SK-N-SH (cell line): ENCODE measurements at regions of chr20 and their contacts with region 1.

Region 1: DNA sequence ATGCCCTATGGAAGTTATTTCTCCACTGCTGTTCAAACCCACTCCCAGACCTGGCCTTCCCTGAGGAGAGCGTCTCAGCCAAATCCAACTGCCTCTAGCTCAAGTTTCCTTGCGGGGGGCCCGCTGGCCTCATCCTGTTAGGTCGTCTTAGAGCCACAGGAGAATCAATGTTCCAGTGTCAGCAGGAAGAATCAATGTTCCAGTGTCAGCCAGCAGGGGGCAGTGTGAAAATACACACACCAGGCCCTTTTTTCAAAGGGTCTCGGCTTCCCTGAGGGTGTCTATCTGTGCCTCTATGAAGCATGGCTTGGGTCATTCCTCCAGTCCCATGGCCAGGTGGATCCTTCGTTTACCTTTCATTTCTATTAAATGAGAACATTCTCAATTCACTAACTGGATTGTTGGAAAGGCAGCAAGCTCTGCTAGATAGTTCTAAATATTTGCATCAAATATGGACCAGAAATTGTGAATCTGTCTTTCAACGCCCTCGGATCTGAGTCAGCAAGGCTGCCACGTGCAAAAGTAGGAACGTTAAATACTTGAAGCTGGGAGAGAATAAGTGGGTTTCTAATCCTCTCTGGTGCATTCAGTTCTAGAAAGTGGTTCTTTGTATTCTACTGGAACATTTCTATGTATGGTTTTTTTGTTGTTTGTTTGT is 19.2 kb downstream of the PRND start:
- DNase-seq: peak; percentile 41
- H3K4me3 ChIP-seq: peak overlapping the region in 1 of 2 experiments; percentile 42; a peak in 1 of 4 replicates
- H3K27ac ChIP-seq: no peak overlapping the region
- H3K4me1 ChIP-seq: no peaks in the 10 kb centered on the region
- H3K27me3 ChIP-seq: peaks cover 18% of the 10 kb centered on the region; the same call in 1 of the 2 replicates
- CTCF ChIP-seq: peak; percentile 82
- EP300 ChIP-seq: no peak
- RAD21 ChIP-seq: peak; percentile 49

Region 2: GRCh38 chr20:4720041-4720976 is 20.6 kb before region 1 on chr20:
- CTCF ChIA-PET with region 1: interaction called, 13 read pairs
- POLR2A ChIA-PET with region 1: interaction called, 4 read pairs
- DNase-seq: peak; percentile 86
- H3K4me3 ChIP-seq: no peak overlapping the region
- H3K27ac ChIP-seq: no peak overlapping the region
- H3K4me1 ChIP-seq: peaks cover 0 to 3% of the 10 kb centered on the region in 2 experiments; a peak in 1 of 4 replicates
- H3K27me3 ChIP-seq: no peaks in the 10 kb centered on the region
- CTCF ChIP-seq: peak; percentile 86
- EP300 ChIP-seq: no peak
- RAD21 ChIP-seq: peak; percentile 90

Region 3: DNA sequence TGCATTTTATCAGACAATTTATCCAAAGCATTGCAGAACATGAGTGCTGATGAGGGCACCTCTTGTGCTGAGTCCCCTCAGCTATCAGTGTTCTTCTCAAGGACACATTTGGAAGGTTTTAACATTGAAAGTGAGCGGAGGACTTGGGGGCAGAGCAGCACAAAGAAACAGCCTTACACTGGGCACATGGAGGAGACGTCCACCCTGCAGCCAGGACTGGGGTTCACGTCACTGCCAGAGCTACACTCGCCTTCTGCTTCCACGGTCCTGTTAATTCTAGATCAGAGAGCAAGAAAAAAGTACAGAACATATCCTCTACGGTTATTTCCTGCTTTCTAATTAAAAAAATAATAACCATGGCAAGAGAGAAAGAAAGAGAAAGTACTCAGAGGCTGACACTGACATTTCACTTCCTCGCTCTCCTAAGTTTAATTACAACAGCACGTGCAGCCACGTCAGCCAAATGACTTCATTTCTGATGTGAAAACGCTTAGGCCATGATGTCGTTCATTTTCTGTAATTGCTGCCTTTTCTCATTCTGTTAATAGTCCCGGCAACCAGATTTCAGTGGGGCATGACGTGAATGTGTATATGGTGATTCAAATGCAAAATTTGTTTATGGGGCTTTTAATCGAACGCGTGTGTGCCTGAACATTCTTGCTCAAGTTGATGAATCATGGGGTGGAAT is 14.0 kb before region 1 on chr20:
- CTCF ChIA-PET with region 1: interaction called, 18 read pairs
- POLR2A ChIA-PET with region 1: interaction called, 4 read pairs
- DNase-seq: no peak
- H3K4me3 ChIP-seq: no peak overlapping the region
- H3K27ac ChIP-seq: no peak overlapping the region
- H3K4me1 ChIP-seq: no peaks in the 10 kb centered on the region
- H3K27me3 ChIP-seq: no peaks in the 10 kb centered on the region
- CTCF ChIP-seq: no peak
- EP300 ChIP-seq: no peak
- RAD21 ChIP-seq: no peak

Region 4: GRCh38 chr20:4770026-4770425 is 29.1 kb after region 1 on chr20:
- CTCF ChIA-PET with region 1: interaction called, 12 read pairs
- POLR2A ChIA-PET with region 1: no interaction called
- DNase-seq: no peak
- H3K4me3 ChIP-seq: no peak overlapping the region
- H3K27ac ChIP-seq: no peak overlapping the region
- H3K4me1 ChIP-seq: no peaks in the 10 kb centered on the region
- H3K27me3 ChIP-seq: no peaks in the 10 kb centered on the region
- CTCF ChIP-seq: no peak
- EP300 ChIP-seq: no peak
- RAD21 ChIP-seq: no peak

Region 5: GRCh38 chr20:4829514-4830215 is 88.8 kb after region 1 on chr20:
- CTCF ChIA-PET with region 1: no interaction called
- POLR2A ChIA-PET with region 1: no interaction called
- DNase-seq: no peak
- H3K4me3 ChIP-seq: no peak overlapping the region
- H3K27ac ChIP-seq: no peak overlapping the region
- H3K4me1 ChIP-seq: no peaks in the 10 kb centered on the region
- H3K27me3 ChIP-seq: no peaks in the 10 kb centered on the region
- CTCF ChIP-seq: no peak
- EP300 ChIP-seq: no peak
- RAD21 ChIP-seq: no peak

Region 6: DNA sequence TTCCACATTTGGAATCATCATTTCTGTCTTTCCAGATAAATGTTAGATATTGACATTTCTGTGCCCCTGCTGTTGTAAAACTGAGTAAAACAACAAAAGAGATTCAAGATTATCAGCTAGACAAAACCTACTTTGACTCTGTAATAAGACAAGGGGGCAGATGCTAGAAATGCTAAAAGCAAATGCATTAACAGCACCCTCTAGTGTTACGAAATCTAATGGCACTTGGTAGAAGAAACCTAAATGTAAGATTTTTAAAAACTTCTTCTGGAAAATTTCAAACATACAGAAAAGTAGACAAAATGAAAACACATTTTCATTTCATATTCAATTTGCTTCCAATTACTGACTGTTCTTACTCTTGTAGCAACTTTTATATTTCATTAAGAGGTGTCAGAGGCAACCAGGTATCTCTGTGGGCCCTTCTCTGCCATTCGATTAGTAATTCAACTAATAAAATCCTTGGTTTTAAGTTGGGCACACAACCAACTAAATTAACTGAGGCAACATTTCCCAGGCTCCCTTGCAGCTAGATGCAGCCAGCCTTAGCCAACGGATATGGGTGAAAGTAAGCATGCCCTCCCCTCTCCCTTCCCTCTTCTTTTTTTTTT is 215.4 kb after region 1 on chr20:
- CTCF ChIA-PET with region 1: interaction called, 10 read pairs
- POLR2A ChIA-PET with region 1: no interaction called
- DNase-seq: peak; percentile 61
- H3K4me3 ChIP-seq: no peak overlapping the region; a peak in 1 of 4 replicates
- H3K27ac ChIP-seq: no peak overlapping the region
- H3K4me1 ChIP-seq: no peaks in the 10 kb centered on the region
- H3K27me3 ChIP-seq: no peaks in the 10 kb centered on the region
- CTCF ChIP-seq: peak; percentile 94
- EP300 ChIP-seq: no peak
- RAD21 ChIP-seq: peak; percentile 89

Region 7: GRCh38 chr20:5100684-5101347 is 359.9 kb after region 1 on chr20:
- CTCF ChIA-PET with region 1: interaction called, 21 read pairs
- POLR2A ChIA-PET with region 1: no interaction called
- DNase-seq: peak; percentile 72
- H3K4me3 ChIP-seq: no peak overlapping the region; a peak in 1 of 4 replicates
- H3K27ac ChIP-seq: no peak overlapping the region
- H3K4me1 ChIP-seq: no peaks in the 10 kb centered on the region
- H3K27me3 ChIP-seq: no peaks in the 10 kb centered on the region
- CTCF ChIP-seq: peak; percentile 93
- EP300 ChIP-seq: no peak
- RAD21 ChIP-seq: peak; percentile 79